Activated CD4-positive, alpha-beta T cell treated with anti-CD3 and anti-CD28 coated beads, Interleukin-2, amount 10 ng/mL, durations not matched to agents 7 days and 5 days (primary cell): ENCODE measurements at regions of chr22 and their contacts with region 1.

Region 1: GRCh38 chr22:26502688-26503561 is 9.3 kb downstream of the TFIP11 start:
- DNase-seq: peak; percentile 84
- H3K4me3 Mint-ChIP-seq: peak overlapping the region; percentile 41
- H3K27ac Mint-ChIP-seq: peak overlapping the region; percentile 84
- H3K4me1 Mint-ChIP-seq: peaks cover 28% of the 10 kb centered on the region
- H3K27me3 Mint-ChIP-seq: no peaks in the 10 kb centered on the region

Region 2: DNA sequence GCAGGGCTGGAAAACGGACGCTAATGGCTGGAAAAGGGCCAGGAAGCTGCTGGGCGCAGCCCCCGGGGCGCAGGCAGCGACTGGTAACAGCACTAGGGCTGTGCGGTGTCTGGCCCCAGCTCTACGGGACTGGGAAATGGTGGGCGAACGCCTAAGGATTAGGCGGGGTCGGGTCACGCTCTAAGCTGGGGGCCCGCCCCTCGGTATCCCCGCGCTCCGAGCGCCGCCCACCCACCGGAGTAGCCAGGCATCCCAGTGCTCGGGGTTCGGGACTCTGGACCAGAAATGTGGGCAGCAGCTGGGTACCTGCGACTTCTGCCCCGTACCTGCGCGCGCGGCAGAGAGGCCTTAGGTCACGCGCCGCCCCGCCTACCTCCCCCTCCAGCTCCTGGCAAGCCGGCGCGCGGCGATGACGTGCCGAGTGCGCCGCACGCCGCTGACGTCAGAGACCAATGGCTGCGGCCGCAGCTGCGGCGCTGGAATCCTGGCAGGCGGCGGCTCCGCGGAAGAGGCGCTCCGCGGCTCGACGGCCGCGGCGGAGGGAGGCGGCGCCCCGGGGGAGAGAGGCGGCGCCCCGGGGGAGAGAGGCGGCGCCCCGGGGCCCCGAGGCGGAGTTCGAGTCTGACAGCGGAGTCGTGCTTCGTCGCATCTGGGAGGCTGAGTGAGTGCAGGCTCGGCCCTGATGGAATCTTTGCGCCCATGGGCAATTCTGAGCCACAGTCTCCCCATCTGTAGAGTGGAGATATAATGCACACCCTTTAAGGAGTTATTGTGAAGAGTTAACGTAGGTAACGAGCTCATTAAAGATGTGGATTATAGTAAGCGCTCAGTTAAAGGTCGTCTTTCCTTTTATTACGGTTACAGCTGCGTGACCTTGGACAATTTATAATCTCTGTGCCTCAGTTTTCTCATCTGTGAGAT is 19.2 kb before region 1 on chr22 and contains the starts of genes HPS4 and SRRD:
- CTCF ChIA-PET with region 1: interaction called, 23 read pairs
- POLR2A ChIA-PET with region 1: interaction called, 7 read pairs
- DNase-seq: peak; percentile 91
- H3K4me3 Mint-ChIP-seq: peak within 1 kb of the TSS; percentile 92
- H3K27ac Mint-ChIP-seq: peak within 1 kb of the TSS; percentile 97
- H3K4me1 Mint-ChIP-seq: peaks cover 68% of the 10 kb centered on the region
- H3K27me3 Mint-ChIP-seq: no peaks in the 10 kb centered on the region
- total RNA-seq, gene HPS4: 32.0 to 35.3 TPM
- total RNA-seq, gene SRRD: 17.9 to 19.1 TPM

Region 3: GRCh38 chr22:26665813-26666231 is 162.9 kb after region 1 on chr22:
- CTCF ChIA-PET with region 1: interaction called, 15 read pairs
- POLR2A ChIA-PET with region 1: no interaction called
- DNase-seq: no peak
- H3K4me3 Mint-ChIP-seq: no peak overlapping the region
- H3K27ac Mint-ChIP-seq: no peak overlapping the region
- H3K4me1 Mint-ChIP-seq: peaks cover 45% of the 10 kb centered on the region
- H3K27me3 Mint-ChIP-seq: no peaks in the 10 kb centered on the region